ENCODE measurements at regions of chr4 and their contacts with region 1.

Region 1: DNA sequence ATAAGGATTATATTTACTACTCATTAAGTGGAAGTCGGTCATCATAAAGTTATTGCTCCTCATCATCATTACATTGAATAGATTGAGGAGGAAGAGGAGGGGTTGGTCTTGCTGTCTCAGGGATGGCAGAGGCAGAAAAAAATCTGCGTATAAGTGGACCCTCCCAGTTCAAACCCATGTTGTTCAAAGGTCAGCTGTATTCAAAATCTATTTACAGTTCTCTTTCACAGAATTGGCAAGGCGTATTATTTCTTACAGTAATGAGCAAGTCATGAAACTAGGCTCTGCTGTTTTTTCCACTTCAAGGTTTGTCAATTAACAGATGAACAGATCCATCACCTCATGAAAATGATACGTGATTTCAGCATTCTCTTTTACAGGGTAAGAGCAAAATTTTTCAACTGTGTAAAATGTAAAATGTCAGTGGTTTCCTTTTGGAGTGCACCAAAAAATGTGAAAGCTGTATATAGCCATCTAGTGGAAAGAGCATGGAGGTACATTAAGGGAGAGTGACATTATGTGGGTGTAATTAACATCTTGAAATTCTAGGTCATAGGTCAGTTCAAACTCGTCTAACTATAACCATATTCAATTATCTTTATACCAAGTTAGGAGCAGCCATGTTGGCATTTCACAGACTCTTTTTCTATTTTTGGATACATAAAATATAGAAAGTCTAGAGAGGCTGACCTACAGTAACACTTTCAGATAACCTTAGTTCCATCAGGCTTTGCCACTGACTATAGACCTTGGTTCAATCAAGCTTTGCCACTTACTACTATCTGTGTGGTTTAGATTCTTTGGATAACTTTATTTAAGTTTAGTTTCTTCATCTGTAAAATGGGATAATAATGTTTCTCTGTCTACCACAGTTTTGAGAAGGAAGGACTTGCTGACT is 30.1 kb downstream of the NEIL3 start:
- DNase-seq: no peak
- H3K4me3 Mint-ChIP-seq: no peak overlapping the region
- H3K27ac Mint-ChIP-seq: peak overlapping the region; percentile 80
- H3K4me1 Mint-ChIP-seq: peaks cover 41% of the 10 kb centered on the region
- H3K27me3 Mint-ChIP-seq: no peaks in the 10 kb centered on the region

Region 2: DNA sequence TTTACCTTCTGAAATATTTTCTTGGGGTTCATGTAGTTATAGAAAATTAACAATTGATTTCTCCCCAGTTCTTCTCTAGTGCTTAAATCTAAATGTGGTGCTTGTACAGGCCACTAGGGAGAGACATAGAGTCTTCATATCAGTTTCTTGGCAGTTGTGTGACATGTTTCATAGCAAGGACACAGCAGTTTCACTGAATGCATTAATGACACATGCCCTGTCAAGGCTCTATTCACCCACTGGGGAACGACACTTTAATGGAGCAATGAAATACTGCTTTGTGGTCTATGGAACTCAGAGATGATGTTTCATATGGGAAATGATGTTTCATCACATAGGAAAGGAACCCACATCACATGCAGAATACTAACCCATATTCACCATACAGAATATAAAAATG is 549.8 kb before region 1 on chr4:
- intact Hi-C with region 1: loop called (anchors 10 kb)
- DNase-seq: no peak
- H3K4me3 Mint-ChIP-seq: no peak overlapping the region
- H3K27ac Mint-ChIP-seq: no peak overlapping the region
- H3K4me1 Mint-ChIP-seq: peaks cover 11% of the 10 kb centered on the region
- H3K27me3 Mint-ChIP-seq: peaks cover 42% of the 10 kb centered on the region

Region 3: DNA sequence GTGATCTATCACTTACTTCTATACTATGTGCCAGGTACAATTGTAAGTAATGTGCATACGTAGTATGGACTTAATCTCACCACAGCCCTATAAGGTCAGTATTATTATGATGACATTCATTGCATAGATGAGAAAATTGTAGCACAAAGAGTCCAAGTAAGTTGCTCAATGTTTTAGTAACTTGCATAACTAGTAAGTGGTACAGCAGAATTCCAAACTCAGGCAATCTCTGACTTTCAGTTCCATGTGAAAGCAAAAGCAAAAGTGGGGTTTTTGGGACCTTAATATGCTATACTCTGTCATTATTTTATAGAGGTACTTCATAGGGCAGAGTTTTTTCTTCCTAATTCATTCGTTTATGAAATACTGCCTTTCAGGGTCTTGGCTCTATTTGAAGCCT is 358.2 kb before region 1 on chr4:
- intact Hi-C with region 1: no loop called
- DNase-seq: no peak
- H3K4me3 Mint-ChIP-seq: no peak overlapping the region
- H3K27ac Mint-ChIP-seq: no peak overlapping the region
- H3K4me1 Mint-ChIP-seq: no peaks in the 10 kb centered on the region
- H3K27me3 Mint-ChIP-seq: no peaks in the 10 kb centered on the region

Region 4: GRCh38 chr4:177047070-177047850 is 292.5 kb before region 1 on chr4:
- intact Hi-C with region 1: loop called (anchors 1 kb)
- DNase-seq: peak; percentile 34
- H3K4me3 Mint-ChIP-seq: no peak overlapping the region
- H3K27ac Mint-ChIP-seq: no peak overlapping the region
- H3K4me1 Mint-ChIP-seq: peaks cover 3% of the 10 kb centered on the region
- H3K27me3 Mint-ChIP-seq: peaks cover 7% of the 10 kb centered on the region

Region 5: GRCh38 chr4:177108708-177109107 is 231.0 kb before region 1 on chr4:
- intact Hi-C with region 1: loop called (anchors 1 kb)
- DNase-seq: no peak
- H3K4me3 Mint-ChIP-seq: no peak overlapping the region
- H3K27ac Mint-ChIP-seq: no peak overlapping the region
- H3K4me1 Mint-ChIP-seq: peaks cover 4% of the 10 kb centered on the region
- H3K27me3 Mint-ChIP-seq: no peaks in the 10 kb centered on the region

Region 6: GRCh38 chr4:177322266-177322665 is 17.5 kb before region 1 on chr4:
- intact Hi-C with region 1: loop called (anchors 2 kb)
- DNase-seq: no peak
- H3K4me3 Mint-ChIP-seq: no peak overlapping the region
- H3K27ac Mint-ChIP-seq: peak overlapping the region; percentile 24
- H3K4me1 Mint-ChIP-seq: peaks cover 79% of the 10 kb centered on the region
- H3K27me3 Mint-ChIP-seq: no peaks in the 10 kb centered on the region